Aorta (tissue), 5 donors: ENCODE measurements at regions of chr9 and their contacts with region 1.

Region 1: DNA sequence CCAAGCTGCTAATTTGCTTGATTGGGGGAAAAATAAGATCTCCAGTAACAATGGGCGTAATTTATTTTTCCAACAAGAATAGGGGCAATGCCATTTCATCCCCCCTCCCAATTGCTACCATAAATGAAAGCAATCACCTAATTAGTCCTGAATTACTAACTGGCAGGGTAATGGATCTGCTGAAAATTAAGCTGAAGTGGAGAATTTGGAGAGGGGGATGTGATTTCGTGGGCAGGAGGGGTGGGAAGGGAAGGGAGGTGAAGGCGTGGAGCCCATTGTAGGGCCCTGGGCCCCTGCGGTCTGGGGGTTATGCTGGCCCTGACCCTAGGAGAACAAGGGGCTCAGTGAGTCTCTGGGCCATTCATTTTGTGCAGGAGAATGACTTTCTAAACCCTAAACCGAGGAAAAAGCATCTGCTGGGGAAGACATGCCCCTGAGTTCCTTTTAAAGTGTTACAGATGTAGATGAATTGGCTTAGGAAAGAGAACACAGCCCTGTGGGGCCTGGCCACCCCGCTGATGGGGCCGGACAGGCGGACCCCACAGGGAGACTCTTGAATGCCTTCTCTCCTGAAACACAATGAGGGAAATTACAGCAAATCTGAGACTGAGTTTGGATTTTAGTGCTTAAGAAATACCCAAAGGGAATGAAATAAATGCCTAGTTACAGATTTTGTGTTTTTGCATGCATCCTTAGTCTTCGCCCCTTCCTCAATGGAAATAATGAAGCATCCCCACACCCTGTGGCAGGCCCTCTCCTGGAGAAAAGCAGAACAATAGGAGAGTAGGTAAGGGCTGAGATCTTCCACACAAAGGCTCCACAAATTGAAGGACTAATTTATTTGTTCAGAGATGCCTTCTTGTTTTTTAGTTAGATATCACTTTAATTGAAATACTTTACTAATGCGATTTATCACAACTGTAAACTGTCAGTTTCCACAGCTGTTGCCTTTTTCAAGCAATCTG is 143.2 kb downstream of the PSAT1 start:
- DNase-seq: no peak
- ATAC-seq: no peak
- H3K4me3 ChIP-seq: no peak overlapping the region
- H3K27ac ChIP-seq: no peak overlapping the region
- H3K4me1 ChIP-seq: no peaks in the 10 kb centered on the region
- H3K27me3 ChIP-seq: no peaks in the 10 kb centered on the region

Region 2: GRCh38 chr9:78235261-78235755 is 204.8 kb before region 1 on chr9:
- intact Hi-C with region 1: no loop called
- DNase-seq: no peak
- ATAC-seq: peak; percentile 2
- H3K4me3 ChIP-seq: peak overlapping the region; percentile 31 to 32
- H3K27ac ChIP-seq: no peak overlapping the region
- H3K4me1 ChIP-seq: no peaks in the 10 kb centered on the region
- H3K27me3 ChIP-seq: no peaks in the 10 kb centered on the region

Region 3: DNA sequence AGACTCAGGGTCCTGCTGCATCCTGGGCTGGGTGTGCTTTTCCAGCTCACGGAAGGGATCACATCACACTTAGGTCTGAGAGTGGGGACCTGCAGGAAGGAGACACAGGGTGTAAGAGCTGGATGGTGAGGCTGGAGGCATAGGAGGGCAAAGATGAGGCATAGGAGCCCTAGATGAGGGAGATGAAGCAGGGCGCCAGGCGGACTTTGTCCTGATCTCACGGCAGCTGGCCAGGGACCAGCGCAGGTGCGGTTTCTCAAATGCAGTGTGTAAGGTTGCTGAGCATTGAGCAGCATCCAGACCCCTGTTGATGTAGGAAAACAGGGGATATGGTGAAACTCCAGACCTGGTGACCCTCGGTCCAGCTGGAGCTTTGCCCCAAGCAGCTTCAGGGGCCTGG is 13.3 kb after region 1 on chr9:
- intact Hi-C with region 1: loop called in 1 of 2 experiments (anchors 1 kb)
- DNase-seq: no peak
- ATAC-seq: no peak
- H3K4me3 ChIP-seq: no peak overlapping the region
- H3K27ac ChIP-seq: no peak overlapping the region
- H3K4me1 ChIP-seq: no peaks in the 10 kb centered on the region
- H3K27me3 ChIP-seq: no peaks in the 10 kb centered on the region

Region 4: GRCh38 chr9:78463750-78464149 is 23.6 kb after region 1 on chr9:
- intact Hi-C with region 1: no loop called
- DNase-seq: no peak
- ATAC-seq: no peak
- H3K4me3 ChIP-seq: no peak overlapping the region
- H3K27ac ChIP-seq: no peak overlapping the region
- H3K4me1 ChIP-seq: no peaks in the 10 kb centered on the region
- H3K27me3 ChIP-seq: no peaks in the 10 kb centered on the region

Region 5: DNA sequence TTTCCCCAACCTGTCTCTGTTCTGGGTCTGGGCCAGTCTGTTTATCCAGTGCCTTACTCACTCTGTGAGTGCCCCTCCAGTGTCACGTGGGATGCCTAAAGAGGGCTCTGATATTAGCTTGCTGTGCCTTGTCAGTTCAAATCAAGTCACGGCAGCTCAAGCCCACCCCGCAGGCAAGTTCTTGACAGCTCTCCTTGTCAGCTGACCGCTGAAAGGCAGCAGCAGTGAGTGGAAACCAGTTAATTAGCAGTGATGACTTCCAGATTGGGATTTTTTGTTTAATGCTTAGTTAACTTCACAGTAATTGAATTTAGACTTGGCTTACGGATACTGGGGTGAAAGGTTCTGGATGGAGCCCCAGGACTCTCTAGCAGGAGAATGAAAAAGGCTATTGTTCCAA is 66.9 kb after region 1 on chr9:
- intact Hi-C with region 1: loop called in 1 of 2 experiments (anchors 10 kb)
- DNase-seq: no peak
- ATAC-seq: no peak
- H3K4me3 ChIP-seq: no peak overlapping the region
- H3K27ac ChIP-seq: no peak overlapping the region
- H3K4me1 ChIP-seq: no peaks in the 10 kb centered on the region
- H3K27me3 ChIP-seq: no peaks in the 10 kb centered on the region